GM12878 (cell line): ENCODE measurements at regions of chr4 and their contacts with region 1.

Region 1: GRCh38 chr4:7042697-7043464 is at the start of gene TADA2B:
- DNase-seq: peak; percentile 63
- ATAC-seq: peak; percentile 86
- H3K4me3 ChIP-seq: peak within 1 kb of the TSS; percentile 83
- H3K27ac ChIP-seq: peak within 1 kb of the TSS; percentile 87
- H3K4me1 ChIP-seq: peaks cover 27% of the 10 kb centered on the region
- H3K27me3 ChIP-seq: peaks cover 0 to 2% of the 10 kb centered on the region in 2 experiments; a peak in 1 of 4 replicates
- CTCF ChIP-seq: peak; percentile 18 to 61 (median 30); a peak in 4 of 6 replicates
- EP300 ChIP-seq: no peak
- POLR2A ChIP-seq: no peak
- RAD21 ChIP-seq: no peak
- polyA plus RNA-seq, gene TADA2B: 0.66 to 1.2 TPM

Region 2: GRCh38 chr4:6880691-6881090 is 162.2 kb before region 1 on chr4:
- CTCF ChIA-PET with region 1: no interaction called
- POLR2A ChIA-PET with region 1: no interaction called
- RAD21 ChIA-PET with region 1: no interaction called
- SMC1A ChIA-PET with region 1: no interaction called
- in situ Hi-C with region 1: no loop called
- intact Hi-C with region 1: no loop called
- DNase-seq: no peak
- ATAC-seq: no peak
- H3K4me3 ChIP-seq: no peak overlapping the region
- H3K27ac ChIP-seq: no peak overlapping the region
- H3K4me1 ChIP-seq: no peaks in the 10 kb centered on the region
- H3K27me3 ChIP-seq: no peaks in the 10 kb centered on the region
- CTCF ChIP-seq: no peak
- EP300 ChIP-seq: no peak
- POLR2A ChIP-seq: no peak
- RAD21 ChIP-seq: no peak

Region 3: DNA sequence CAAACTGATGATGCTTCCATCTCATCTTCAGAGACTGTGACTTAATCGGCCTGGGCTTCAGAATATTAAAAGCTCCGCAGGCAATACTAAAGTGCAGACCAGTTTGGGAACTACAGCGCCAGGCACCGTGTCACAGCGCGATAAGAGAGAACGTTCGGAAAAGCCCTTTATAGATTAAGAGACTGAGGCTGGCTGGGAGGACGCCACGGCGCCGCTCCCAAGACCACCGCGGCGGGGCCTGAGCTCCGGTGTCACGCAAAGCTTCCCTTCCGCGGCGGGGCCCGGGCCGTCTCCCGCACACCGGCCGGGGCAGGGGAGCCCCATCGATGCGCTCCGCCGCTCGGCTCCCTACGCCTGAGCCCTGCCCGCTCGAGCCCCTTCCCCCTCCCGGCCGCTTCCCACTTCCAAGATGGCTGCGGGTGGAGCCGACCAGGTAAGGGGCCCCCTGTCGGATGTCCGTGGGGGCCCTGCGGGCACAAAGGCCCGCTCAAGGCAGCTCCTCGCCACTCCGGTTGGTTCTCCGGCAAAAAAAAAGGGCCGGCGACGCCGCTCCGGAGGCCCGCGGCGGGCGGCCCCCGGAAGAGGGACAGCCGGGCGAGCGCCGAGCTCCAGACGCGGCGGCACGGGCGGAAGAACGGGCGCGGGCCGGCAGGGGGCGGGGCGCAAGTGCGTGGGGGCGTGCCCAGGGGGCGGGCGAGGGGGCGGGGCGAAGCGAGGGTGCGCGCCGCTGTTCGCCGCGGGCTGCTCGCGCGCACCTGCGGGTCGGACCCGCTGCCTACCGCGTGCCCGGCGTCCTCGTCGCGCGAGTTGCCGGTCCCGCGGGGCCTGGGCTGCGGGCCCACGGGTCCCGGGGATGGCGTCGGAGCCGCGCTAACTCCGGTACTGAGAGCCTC is 133.6 kb before region 1 on chr4 and contains the start of gene TBC1D14:
- CTCF ChIA-PET with region 1: interaction called, 6 read pairs
- POLR2A ChIA-PET with region 1: interaction called, 3 read pairs
- RAD21 ChIA-PET with region 1: interaction called, 5 read pairs
- SMC1A ChIA-PET with region 1: interaction called, 7 read pairs
- in situ Hi-C with region 1: no loop called
- intact Hi-C with region 1: loop called (anchors 5 kb)
- DNase-seq: no peak
- ATAC-seq: peak; percentile 94
- H3K4me3 ChIP-seq: peak within 1 kb of the TSS; percentile 97
- H3K27ac ChIP-seq: peak within 1 kb of the TSS; percentile 96
- H3K4me1 ChIP-seq: peaks cover 17% of the 10 kb centered on the region
- H3K27me3 ChIP-seq: 0 out of 4 replicates have a peak, but pooled peaks cover 0 to 3% of the 10 kb centered on the region in 2 experiments
- CTCF ChIP-seq: no peak; a peak in 2 of 6 replicates
- EP300 ChIP-seq: no peak
- POLR2A ChIP-seq: peak; percentile 82
- RAD21 ChIP-seq: no peak
- polyA plus RNA-seq, gene TBC1D14: 0.87 to 1.1 TPM

Region 4: DNA sequence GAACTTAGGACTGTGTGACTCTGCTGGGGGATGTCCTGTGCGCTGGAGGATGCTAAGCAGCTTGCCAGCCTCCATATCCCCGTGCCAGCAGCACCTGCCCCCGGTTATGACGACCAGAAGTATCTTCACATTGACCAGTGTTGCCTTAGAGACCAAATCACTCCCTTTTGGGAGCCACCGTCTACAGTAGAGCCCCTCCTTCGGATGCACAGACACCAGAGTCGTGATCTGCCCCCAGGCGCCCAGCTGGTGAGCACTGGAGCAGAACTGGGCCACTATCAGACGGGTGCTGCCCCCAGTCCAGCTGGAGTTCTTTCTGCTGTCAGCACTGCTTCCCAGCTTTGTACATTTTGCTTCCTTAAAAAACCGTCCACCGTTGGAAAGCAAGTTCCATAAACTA is 29.7 kb before region 1 on chr4:
- CTCF ChIA-PET with region 1: interaction called, 18 read pairs
- POLR2A ChIA-PET with region 1: interaction called, 15 read pairs
- RAD21 ChIA-PET with region 1: interaction called, 5 read pairs
- SMC1A ChIA-PET with region 1: interaction called, 3 read pairs
- in situ Hi-C with region 1: no loop called
- intact Hi-C with region 1: no loop called
- DNase-seq: no peak
- ATAC-seq: peak; percentile 58
- H3K4me3 ChIP-seq: no peak overlapping the region
- H3K27ac ChIP-seq: peak overlapping the region; percentile 85
- H3K4me1 ChIP-seq: peaks cover 17% of the 10 kb centered on the region
- H3K27me3 ChIP-seq: no peaks in the 10 kb centered on the region
- CTCF ChIP-seq: no peak
- EP300 ChIP-seq: no peak
- POLR2A ChIP-seq: no peak
- RAD21 ChIP-seq: no peak

Region 5: GRCh38 chr4:7055111-7055989 is 12.5 kb after region 1 on chr4:
- CTCF ChIA-PET with region 1: interaction called, 12 read pairs
- POLR2A ChIA-PET with region 1: interaction called, 3 read pairs
- RAD21 ChIA-PET with region 1: interaction called, 9 read pairs
- SMC1A ChIA-PET with region 1: interaction called, 20 read pairs
- in situ Hi-C with region 1: no loop called
- intact Hi-C with region 1: loop called (anchors 2 kb)
- DNase-seq: no peak
- ATAC-seq: no peak
- H3K4me3 ChIP-seq: no peak overlapping the region
- H3K27ac ChIP-seq: no peak overlapping the region
- H3K4me1 ChIP-seq: peaks cover 14% of the 10 kb centered on the region
- H3K27me3 ChIP-seq: no peaks in the 10 kb centered on the region
- CTCF ChIP-seq: no peak
- EP300 ChIP-seq: no peak
- POLR2A ChIP-seq: no peak
- RAD21 ChIP-seq: no peak